CD8-positive, alpha-beta T cell (primary cell): ENCODE measurements at regions of chr22 and their contacts with region 1.

Region 1: DNA sequence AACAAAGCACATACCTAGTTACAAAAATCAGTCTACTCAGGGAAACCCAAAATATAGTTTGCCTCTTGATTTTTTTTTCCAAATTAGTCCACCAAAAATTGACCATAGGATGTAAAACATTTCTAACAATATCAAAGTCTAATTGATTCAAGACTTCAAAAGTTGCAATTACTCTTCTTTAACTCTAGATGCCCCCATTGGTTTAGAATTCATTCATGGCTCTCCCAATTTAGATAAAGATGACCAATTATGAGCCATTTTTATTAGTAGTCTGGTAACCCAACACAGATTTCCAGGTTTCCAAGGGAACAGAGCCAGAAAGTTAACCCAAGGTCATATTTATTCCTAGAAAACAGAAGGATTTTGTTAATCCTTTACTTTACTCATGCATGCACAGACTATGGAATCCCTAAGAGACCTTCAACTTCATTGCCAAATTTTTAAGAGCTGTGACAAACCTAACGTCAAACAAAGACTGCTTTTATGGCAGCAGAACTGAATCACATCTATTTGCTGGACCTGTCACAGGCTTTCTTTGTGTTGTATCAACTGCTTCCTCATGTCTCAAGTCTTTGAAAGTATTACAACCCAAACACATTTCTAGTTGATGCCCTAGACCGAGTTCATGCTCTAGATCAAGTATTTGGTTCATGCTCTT is 55.3 kb downstream of the C22orf42 start:
- DNase-seq: peak in 2 of 9 experiments; percentile 27 to 45
- ATAC-seq: no peak
- H3K4me3 ChIP-seq: no peak overlapping the region
- H3K4me3 Mint-ChIP-seq: no peak overlapping the region
- H3K27ac ChIP-seq: no peak overlapping the region
- H3K27ac Mint-ChIP-seq: no peak overlapping the region
- H3K4me1 ChIP-seq: no peaks in the 10 kb centered on the region
- H3K4me1 Mint-ChIP-seq: no peaks in the 10 kb centered on the region
- H3K27me3 ChIP-seq: no peaks in the 10 kb centered on the region
- H3K27me3 Mint-ChIP-seq: peaks cover 39% of the 10 kb centered on the region
- CTCF ChIP-seq: peak; percentile 71

Region 2: GRCh38 chr22:32265882-32266767 is 162.3 kb after region 1 on chr22:
- CTCF ChIA-PET with region 1: interaction called, 49 read pairs
- POLR2A ChIA-PET with region 1: no interaction called
- intact Hi-C with region 1: loop called (anchors 1 kb)
- DNase-seq: peak; percentile 27 to 76 (median 62)
- ATAC-seq: peak; percentile 63
- H3K4me3 ChIP-seq: no peak overlapping the region
- H3K4me3 Mint-ChIP-seq: no peak overlapping the region
- H3K27ac ChIP-seq: no peak overlapping the region
- H3K27ac Mint-ChIP-seq: no peak overlapping the region
- H3K4me1 ChIP-seq: no peaks in the 10 kb centered on the region
- H3K4me1 Mint-ChIP-seq: peaks cover 7% of the 10 kb centered on the region
- H3K27me3 ChIP-seq: no peaks in the 10 kb centered on the region
- H3K27me3 Mint-ChIP-seq: peaks cover 8% of the 10 kb centered on the region
- CTCF ChIP-seq: peak; percentile 89

Region 3: GRCh38 chr22:32518848-32519247 is 415.1 kb after region 1 on chr22:
- CTCF ChIA-PET with region 1: interaction called, 3 read pairs
- POLR2A ChIA-PET with region 1: no interaction called
- intact Hi-C with region 1: loop called in 1 of 2 experiments (anchors 5 kb)
- DNase-seq: peak in 2 of 9 experiments; percentile 16 to 26
- ATAC-seq: no peak
- H3K4me3 ChIP-seq: no peak overlapping the region
- H3K4me3 Mint-ChIP-seq: no peak overlapping the region
- H3K27ac ChIP-seq: no peak overlapping the region
- H3K27ac Mint-ChIP-seq: no peak overlapping the region
- H3K4me1 ChIP-seq: no peaks in the 10 kb centered on the region
- H3K4me1 Mint-ChIP-seq: no peaks in the 10 kb centered on the region
- H3K27me3 ChIP-seq: no peaks in the 10 kb centered on the region
- H3K27me3 Mint-ChIP-seq: no peaks in the 10 kb centered on the region
- CTCF ChIP-seq: no peak

Region 4: GRCh38 chr22:33000342-33001280 is 896.8 kb after region 1 on chr22:
- CTCF ChIA-PET with region 1: no interaction called
- POLR2A ChIA-PET with region 1: no interaction called
- intact Hi-C with region 1: loop called (anchors 2 to 5 kb)
- DNase-seq: peak in 6 of 9 experiments; percentile 4 to 51 (median 25)
- ATAC-seq: no peak
- H3K4me3 ChIP-seq: no peak overlapping the region
- H3K4me3 Mint-ChIP-seq: no peak overlapping the region
- H3K27ac ChIP-seq: no peak overlapping the region
- H3K27ac Mint-ChIP-seq: no peak overlapping the region
- H3K4me1 ChIP-seq: no peaks in the 10 kb centered on the region
- H3K4me1 Mint-ChIP-seq: peaks cover 2% of the 10 kb centered on the region
- H3K27me3 ChIP-seq: no peaks in the 10 kb centered on the region
- H3K27me3 Mint-ChIP-seq: peaks cover 6% of the 10 kb centered on the region
- CTCF ChIP-seq: peak; percentile 62